CD4-positive, alpha-beta memory T cell (primary cell): ENCODE measurements at regions of chr11 and their contacts with region 1.

Region 1: GRCh38 chr11:57644748-57645688 is 4.7 kb downstream of the YPEL4 start:
- DNase-seq: peak; percentile 82 to 89 (median 86)
- H3K4me3 ChIP-seq: no peak overlapping the region
- H3K4me3 Mint-ChIP-seq: peak overlapping the region in 1 of 8 donors; percentile 67
- H3K27ac ChIP-seq: no peak overlapping the region
- H3K27ac Mint-ChIP-seq: peak overlapping the region in 2 of 7 donors; percentile 62 to 69
- H3K4me1 ChIP-seq: peaks cover 17% of the 10 kb centered on the region
- H3K4me1 Mint-ChIP-seq: peaks cover 18 to 38% (median 28%) of the 10 kb centered on the region in 4 donors
- H3K27me3 ChIP-seq: peaks cover 37% of the 10 kb centered on the region
- H3K27me3 Mint-ChIP-seq: peaks cover 31 to 50% of the 10 kb centered on the region in 2 donors

Region 2: GRCh38 chr11:57567515-57568329 is 77.3 kb before region 1 on chr11 and contains the start of gene UBE2L6:
- CTCF ChIA-PET with region 1: interaction called, 181 read pairs
- POLR2A ChIA-PET with region 1: interaction called, 20 read pairs
- intact Hi-C with region 1: loop called (anchors 1 kb)
- DNase-seq: peak; percentile 59 to 86 (median 66)
- H3K4me3 ChIP-seq: peak within 1 kb of the TSS; percentile 72 to 81
- H3K4me3 Mint-ChIP-seq: peak within 1 kb of the TSS; percentile 94 to 100 (median 99)
- H3K27ac ChIP-seq: peak within 1 kb of the TSS; percentile 93
- H3K27ac Mint-ChIP-seq: peak within 1 kb of the TSS; percentile 97 to 99 (median 98)
- H3K4me1 ChIP-seq: peaks cover 34% of the 10 kb centered on the region
- H3K4me1 Mint-ChIP-seq: peaks cover 27 to 65% (median 42%) of the 10 kb centered on the region in 4 donors
- H3K27me3 ChIP-seq: no peaks in the 10 kb centered on the region
- H3K27me3 Mint-ChIP-seq: no peaks in the 10 kb centered on the region
- total RNA-seq, gene UBE2L6: 79.7 to 82.9 TPM

Region 3: GRCh38 chr11:57630193-57630592 is 14.8 kb before region 1 on chr11:
- CTCF ChIA-PET with region 1: interaction called, 20 read pairs
- POLR2A ChIA-PET with region 1: no interaction called
- intact Hi-C with region 1: no loop called
- DNase-seq: no peak
- H3K4me3 ChIP-seq: no peak overlapping the region
- H3K4me3 Mint-ChIP-seq: no peak overlapping the region
- H3K27ac ChIP-seq: no peak overlapping the region
- H3K27ac Mint-ChIP-seq: peak overlapping the region in 1 of 7 donors; percentile 48
- H3K4me1 ChIP-seq: no peaks in the 10 kb centered on the region
- H3K4me1 Mint-ChIP-seq: no peaks in the 10 kb centered on the region
- H3K27me3 ChIP-seq: no peaks in the 10 kb centered on the region
- H3K27me3 Mint-ChIP-seq: peaks cover 24 to 27% of the 10 kb centered on the region in 2 donors

Region 4: GRCh38 chr11:57764021-57764420 is 119.0 kb after region 1 on chr11:
- CTCF ChIA-PET with region 1: no interaction called
- POLR2A ChIA-PET with region 1: no interaction called
- intact Hi-C with region 1: no loop called
- DNase-seq: no peak
- H3K4me3 ChIP-seq: no peak overlapping the region
- H3K4me3 Mint-ChIP-seq: no peak overlapping the region
- H3K27ac ChIP-seq: no peak overlapping the region
- H3K27ac Mint-ChIP-seq: peak overlapping the region in 1 of 7 donors; percentile 0
- H3K4me1 ChIP-seq: no peaks in the 10 kb centered on the region
- H3K4me1 Mint-ChIP-seq: peaks cover 0 to 1% (median 0%) of the 10 kb centered on the region in 4 donors
- H3K27me3 ChIP-seq: no peaks in the 10 kb centered on the region
- H3K27me3 Mint-ChIP-seq: peaks cover 0 to 1% of the 10 kb centered on the region in 2 donors

Region 5: GRCh38 chr11:57792060-57792541 is 147.1 kb after region 1 on chr11:
- CTCF ChIA-PET with region 1: interaction called, 4 read pairs
- POLR2A ChIA-PET with region 1: no interaction called
- intact Hi-C with region 1: loop called (anchors 2 kb)
- DNase-seq: peak; percentile 84 to 93 (median 88)
- H3K4me3 ChIP-seq: peak overlapping the region in 1 of 2 donors; percentile 23
- H3K4me3 Mint-ChIP-seq: peak overlapping the region; percentile 58 to 87 (median 76)
- H3K27ac ChIP-seq: peak overlapping the region; percentile 61
- H3K27ac Mint-ChIP-seq: peak overlapping the region; percentile 84 to 99 (median 97)
- H3K4me1 ChIP-seq: peaks cover 35% of the 10 kb centered on the region
- H3K4me1 Mint-ChIP-seq: peaks cover 26 to 39% (median 32%) of the 10 kb centered on the region in 4 donors
- H3K27me3 ChIP-seq: no peaks in the 10 kb centered on the region
- H3K27me3 Mint-ChIP-seq: no peaks in the 10 kb centered on the region